Activated CD4-positive, alpha-beta memory T cell treated with anti-CD3 and anti-CD28 coated beads for 36 hours (primary cell): ENCODE measurements at regions of chr17 and their contacts with region 1.

Region 1: DNA sequence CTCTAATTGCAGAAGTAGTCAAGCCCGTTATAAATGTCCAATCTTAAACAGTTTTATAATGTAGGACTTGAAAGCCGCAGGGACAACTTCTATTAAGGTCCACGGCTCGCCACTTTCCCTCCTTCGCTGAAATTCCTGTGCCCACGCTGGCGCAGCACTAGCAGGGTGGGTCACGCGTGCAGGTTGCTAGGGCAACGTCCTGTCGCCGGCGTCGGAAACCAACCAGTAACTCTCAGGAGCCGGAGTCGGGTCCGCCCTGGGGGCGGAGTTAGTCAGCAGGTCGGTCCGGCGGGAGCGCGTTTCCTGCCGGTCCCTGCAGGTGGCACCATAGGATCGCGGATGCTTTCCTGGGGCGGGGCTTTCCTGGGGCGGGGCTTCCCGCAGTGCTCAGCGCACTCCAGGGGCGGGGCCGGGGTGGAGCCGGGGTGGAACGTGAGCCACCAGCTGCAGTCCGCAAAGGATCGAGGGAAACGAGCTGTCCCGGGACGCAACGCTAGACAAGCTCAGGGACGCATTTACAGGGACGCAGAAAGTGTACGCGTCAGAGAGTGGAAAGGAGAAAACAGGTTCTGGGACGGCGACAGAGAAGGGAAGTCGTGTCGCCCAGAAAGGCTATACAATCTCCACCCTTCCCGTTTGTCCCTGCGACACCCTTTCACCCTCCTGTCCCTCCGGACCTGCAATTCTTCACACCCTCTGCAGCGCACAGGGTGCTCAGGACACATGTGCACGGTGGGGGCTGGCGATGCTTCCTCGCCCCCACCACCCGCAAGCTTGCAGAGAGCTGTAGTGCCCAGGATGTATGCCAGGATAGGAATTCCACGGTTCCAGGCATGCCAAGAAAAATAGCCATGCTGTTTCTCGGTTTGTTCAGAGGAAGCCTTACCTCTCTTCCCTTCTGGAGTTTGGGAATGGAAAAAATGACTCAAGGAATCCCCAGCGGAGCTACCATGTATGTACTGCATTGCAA is 12.4 kb downstream of the COPZ2 start:
- DNase-seq: peak; percentile 99
- H3K4me3 Mint-ChIP-seq: peak overlapping the region; percentile 82
- H3K27ac Mint-ChIP-seq: peak overlapping the region; percentile 34
- H3K4me1 Mint-ChIP-seq: peaks cover 22% of the 10 kb centered on the region
- H3K27me3 Mint-ChIP-seq: peaks cover 11% of the 10 kb centered on the region

Region 2: GRCh38 chr17:47776330-47777197 is 248.7 kb before region 1 on chr17:
- CTCF ChIA-PET with region 1: no interaction called
- POLR2A ChIA-PET with region 1: no interaction called
- intact Hi-C with region 1: no loop called
- DNase-seq: peak; percentile 45
- H3K4me3 Mint-ChIP-seq: no peak overlapping the region
- H3K27ac Mint-ChIP-seq: no peak overlapping the region
- H3K4me1 Mint-ChIP-seq: no peaks in the 10 kb centered on the region
- H3K27me3 Mint-ChIP-seq: peaks cover 44% of the 10 kb centered on the region

Region 3: DNA sequence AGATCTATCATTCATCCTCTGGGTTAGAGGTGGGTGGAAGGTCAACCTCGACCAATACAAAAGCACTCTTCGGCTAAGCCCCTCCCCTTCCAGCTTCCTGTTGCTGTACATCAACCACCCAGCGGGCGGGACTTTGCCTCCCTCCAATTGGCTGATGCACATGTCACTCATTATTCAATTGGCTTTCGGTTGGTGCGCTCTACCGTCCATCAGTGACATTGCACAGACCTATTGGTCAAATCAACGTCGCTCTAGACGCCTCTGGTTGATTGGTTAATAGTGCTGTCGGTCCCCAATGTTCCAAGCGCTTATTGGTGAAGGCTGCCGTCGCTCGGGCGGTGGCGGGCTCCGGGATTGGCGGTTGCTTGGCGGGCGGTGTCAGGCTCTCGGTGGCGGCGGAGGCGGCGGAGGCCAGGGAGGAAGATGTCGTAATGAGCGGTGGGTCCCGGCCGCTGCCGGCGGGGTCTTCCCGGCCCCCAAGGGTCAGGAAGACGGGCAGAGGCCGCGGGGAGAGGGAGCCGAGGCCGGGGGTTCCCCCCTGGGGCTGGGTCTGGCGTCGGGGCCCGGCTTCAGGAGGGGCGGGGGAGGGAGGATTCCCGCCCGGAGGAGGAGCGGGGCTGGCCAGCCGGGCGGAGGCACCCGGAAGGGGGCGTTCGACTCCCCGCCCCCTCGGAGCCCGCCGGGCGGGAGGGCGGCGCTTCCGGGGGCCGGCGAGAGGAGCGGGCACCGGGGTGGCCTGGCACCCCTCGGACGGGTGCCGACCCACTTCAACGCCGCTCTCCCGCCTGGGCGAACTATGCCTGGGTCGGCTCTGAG is 129.2 kb before region 1 on chr17 and contains the start of gene SP2:
- CTCF ChIA-PET with region 1: no interaction called
- POLR2A ChIA-PET with region 1: no interaction called
- intact Hi-C with region 1: loop called (anchors 2 kb)
- DNase-seq: peak; percentile 100
- H3K4me3 Mint-ChIP-seq: peak within 1 kb of the TSS; percentile 95
- H3K27ac Mint-ChIP-seq: peak within 1 kb of the TSS; percentile 87
- H3K4me1 Mint-ChIP-seq: peaks cover 34% of the 10 kb centered on the region
- H3K27me3 Mint-ChIP-seq: no peaks in the 10 kb centered on the region
- total RNA-seq, gene SP2: 15.1 to 17.2 TPM

Region 4: GRCh38 chr17:47995241-47995935 is 29.8 kb before region 1 on chr17:
- CTCF ChIA-PET with region 1: no interaction called
- POLR2A ChIA-PET with region 1: no interaction called
- intact Hi-C with region 1: no loop called
- DNase-seq: no peak
- H3K4me3 Mint-ChIP-seq: no peak overlapping the region
- H3K27ac Mint-ChIP-seq: no peak overlapping the region
- H3K4me1 Mint-ChIP-seq: peaks cover 3% of the 10 kb centered on the region
- H3K27me3 Mint-ChIP-seq: peaks cover 3% of the 10 kb centered on the region

Region 5: DNA sequence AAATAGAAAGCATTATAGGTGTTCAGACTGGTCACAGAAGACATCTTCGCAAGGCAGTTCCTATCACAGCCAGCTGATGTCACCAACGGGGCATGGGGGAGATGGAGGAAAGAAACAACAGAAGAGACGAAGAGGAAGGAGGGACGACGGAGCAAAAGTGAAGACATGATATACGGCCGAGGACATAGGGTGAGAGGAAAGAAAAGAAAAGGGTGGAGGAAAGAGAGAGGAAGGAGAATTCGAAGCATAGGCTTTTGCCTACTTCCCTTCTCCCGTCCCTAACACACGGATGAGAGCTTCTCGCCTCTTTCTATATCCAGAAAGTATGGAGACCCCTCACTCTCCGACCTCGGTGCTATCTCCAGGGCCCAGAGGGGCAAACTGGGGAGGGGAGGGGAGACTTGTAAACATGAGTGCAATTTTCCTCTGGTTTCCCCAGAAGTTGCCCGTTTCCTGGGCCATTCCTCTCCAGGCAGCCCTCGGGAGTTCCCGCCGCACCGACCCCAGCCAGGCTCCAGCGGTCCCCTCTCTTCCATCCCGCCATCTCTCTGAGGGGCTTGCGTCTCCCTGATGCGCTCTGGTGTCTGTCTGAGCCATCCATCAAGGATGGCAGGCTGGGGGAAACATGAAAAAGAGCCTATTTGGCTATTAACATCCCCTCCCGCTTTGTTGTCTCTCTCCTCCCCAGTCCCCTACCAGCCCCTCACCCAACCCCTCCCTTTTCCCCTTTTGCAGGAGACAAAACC is 13.6 kb before region 1 on chr17:
- CTCF ChIA-PET with region 1: interaction called, 15 read pairs
- POLR2A ChIA-PET with region 1: no interaction called
- intact Hi-C with region 1: no loop called
- DNase-seq: peak; percentile 67
- H3K4me3 Mint-ChIP-seq: peak overlapping the region; percentile 66
- H3K27ac Mint-ChIP-seq: no peak overlapping the region
- H3K4me1 Mint-ChIP-seq: peaks cover 13% of the 10 kb centered on the region
- H3K27me3 Mint-ChIP-seq: peaks cover 45% of the 10 kb centered on the region

Region 6: GRCh38 chr17:48054238-48055185 is 29.3 kb after region 1 on chr17:
- CTCF ChIA-PET with region 1: interaction called, 77 read pairs
- POLR2A ChIA-PET with region 1: interaction called, 3 read pairs
- intact Hi-C with region 1: no loop called
- DNase-seq: no peak
- H3K4me3 Mint-ChIP-seq: peak overlapping the region; percentile 65
- H3K27ac Mint-ChIP-seq: peak overlapping the region; percentile 99
- H3K4me1 Mint-ChIP-seq: peaks cover 69% of the 10 kb centered on the region
- H3K27me3 Mint-ChIP-seq: no peaks in the 10 kb centered on the region

Region 7: DNA sequence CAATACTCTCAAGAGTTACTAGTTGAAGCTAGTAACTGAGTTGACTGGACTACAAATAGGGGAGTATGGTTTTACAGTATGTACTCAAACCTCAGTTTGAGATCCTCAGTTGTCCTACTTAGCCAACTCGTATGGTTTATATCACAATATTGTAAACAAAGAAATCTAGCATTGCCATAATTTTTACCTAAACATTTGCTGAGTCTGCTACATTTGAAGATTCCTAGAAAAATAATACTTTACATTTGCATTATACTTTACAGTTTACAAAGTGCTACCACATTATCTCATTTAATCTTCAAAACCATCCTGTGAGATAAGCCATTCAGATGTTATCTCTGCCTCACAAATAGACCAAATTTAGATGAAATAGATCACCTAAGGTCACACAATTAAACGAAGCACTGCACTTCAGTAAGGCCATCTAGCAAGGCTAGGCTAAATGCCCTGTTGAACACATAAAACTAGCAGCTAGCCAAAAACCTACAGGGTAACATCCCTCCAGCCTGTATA is 59.8 kb after region 1 on chr17:
- CTCF ChIA-PET with region 1: interaction called, 47 read pairs
- POLR2A ChIA-PET with region 1: no interaction called
- intact Hi-C with region 1: no loop called
- DNase-seq: no peak
- H3K4me3 Mint-ChIP-seq: no peak overlapping the region
- H3K27ac Mint-ChIP-seq: no peak overlapping the region
- H3K4me1 Mint-ChIP-seq: no peaks in the 10 kb centered on the region
- H3K27me3 Mint-ChIP-seq: no peaks in the 10 kb centered on the region

Region 8: GRCh38 chr17:48131216-48131824 is 106.1 kb after region 1 on chr17:
- CTCF ChIA-PET with region 1: interaction called, 50 read pairs
- POLR2A ChIA-PET with region 1: no interaction called
- intact Hi-C with region 1: loop called (anchors 1 kb)
- DNase-seq: peak; percentile 49
- H3K4me3 Mint-ChIP-seq: no peak overlapping the region
- H3K27ac Mint-ChIP-seq: no peak overlapping the region
- H3K4me1 Mint-ChIP-seq: no peaks in the 10 kb centered on the region
- H3K27me3 Mint-ChIP-seq: no peaks in the 10 kb centered on the region

Region 9: DNA sequence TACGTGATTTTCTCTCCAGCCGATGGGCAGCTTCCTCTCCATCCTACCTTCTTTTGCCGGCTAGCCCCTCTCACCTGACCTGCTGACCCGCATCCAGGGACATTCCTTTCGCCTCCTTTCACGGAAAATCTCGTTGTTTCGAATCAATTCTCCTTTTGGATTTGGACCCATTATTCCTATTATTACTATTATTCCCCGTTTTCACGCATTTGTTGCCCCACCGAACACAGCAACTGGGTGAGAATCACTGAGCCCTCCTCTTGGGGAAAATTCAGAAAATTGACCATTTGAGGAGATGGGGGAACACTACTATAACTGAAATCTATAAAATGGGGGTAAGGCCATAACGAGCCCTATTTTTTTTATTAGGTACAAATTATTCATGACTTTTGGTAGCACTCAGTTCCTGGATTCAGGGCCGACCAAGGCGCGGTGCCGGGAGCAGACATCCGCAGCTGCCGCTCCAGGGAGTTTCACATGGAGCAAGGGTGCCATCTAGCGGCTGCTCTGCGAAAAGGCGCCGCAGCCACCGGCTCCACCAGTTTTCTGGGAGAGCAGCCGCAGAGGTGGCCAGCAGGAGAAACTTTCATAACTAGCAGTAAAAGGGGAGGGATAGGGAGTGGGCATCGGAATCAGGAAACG is 593.2 kb after region 1 on chr17:
- CTCF ChIA-PET with region 1: interaction called, 19 read pairs
- POLR2A ChIA-PET with region 1: no interaction called
- intact Hi-C with region 1: loop called (anchors 5 kb)
- DNase-seq: peak; percentile 89
- H3K4me3 Mint-ChIP-seq: peak overlapping the region; percentile 17
- H3K27ac Mint-ChIP-seq: peak overlapping the region; percentile 40
- H3K4me1 Mint-ChIP-seq: peaks cover 42% of the 10 kb centered on the region
- H3K27me3 Mint-ChIP-seq: peaks cover 89% of the 10 kb centered on the region